IMR-90 (cell line): ENCODE measurements at regions of chr7 and their contacts with region 1.

Region 1: GRCh38 chr7:104106108-104106905 is 101.5 kb downstream of the ORC5 start:
- DNase-seq: peak; percentile 50
- ATAC-seq: peak; percentile 86
- H3K4me3 ChIP-seq: no peak overlapping the region
- H3K27ac ChIP-seq: no peak overlapping the region
- H3K4me1 ChIP-seq: no peaks in the 10 kb centered on the region
- H3K27me3 ChIP-seq: peaks cover 2% of the 10 kb centered on the region; the same call in 1 of the 2 replicates
- CTCF ChIP-seq: peak; percentile 52
- POLR2A ChIP-seq: no peak
- RAD21 ChIP-seq: peak; percentile 50

Region 2: DNA sequence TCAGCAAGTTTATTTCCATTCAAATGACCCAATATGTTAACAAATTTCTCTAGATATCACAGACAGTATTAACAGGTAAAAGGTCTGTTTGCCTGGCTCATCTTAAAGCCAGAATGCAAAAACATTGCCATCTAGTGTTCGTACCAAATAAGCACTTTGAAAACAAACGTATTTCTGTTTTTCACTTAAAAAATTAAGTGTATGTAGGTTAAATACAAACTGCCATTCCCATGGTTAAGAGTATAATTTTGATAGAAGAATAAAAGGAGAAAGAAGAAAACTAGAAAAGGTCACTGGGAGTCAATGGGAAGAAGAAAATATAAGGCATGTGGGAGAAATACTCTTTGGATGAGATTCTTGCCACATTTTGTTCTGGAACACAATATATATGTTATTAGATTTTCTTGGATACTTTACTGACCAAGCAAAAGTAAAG is 50.6 kb after region 1 on chr7:
- CTCF ChIA-PET with region 1: interaction called, 4 read pairs
- POLR2A ChIA-PET with region 1: no interaction called
- dilution Hi-C with region 1: no loop called
- in situ Hi-C with region 1: no loop called
- intact Hi-C with region 1: loop called (anchors 1 kb)
- DNase-seq: peak; percentile 57
- ATAC-seq: no peak
- H3K4me3 ChIP-seq: no peak overlapping the region
- H3K27ac ChIP-seq: no peak overlapping the region
- H3K4me1 ChIP-seq: no peaks in the 10 kb centered on the region
- H3K27me3 ChIP-seq: no peaks in the 10 kb centered on the region
- CTCF ChIP-seq: peak; percentile 70
- POLR2A ChIP-seq: no peak
- RAD21 ChIP-seq: peak; percentile 72